ENCODE measurements at regions of chr12 and their contacts with region 1.

Region 1: DNA sequence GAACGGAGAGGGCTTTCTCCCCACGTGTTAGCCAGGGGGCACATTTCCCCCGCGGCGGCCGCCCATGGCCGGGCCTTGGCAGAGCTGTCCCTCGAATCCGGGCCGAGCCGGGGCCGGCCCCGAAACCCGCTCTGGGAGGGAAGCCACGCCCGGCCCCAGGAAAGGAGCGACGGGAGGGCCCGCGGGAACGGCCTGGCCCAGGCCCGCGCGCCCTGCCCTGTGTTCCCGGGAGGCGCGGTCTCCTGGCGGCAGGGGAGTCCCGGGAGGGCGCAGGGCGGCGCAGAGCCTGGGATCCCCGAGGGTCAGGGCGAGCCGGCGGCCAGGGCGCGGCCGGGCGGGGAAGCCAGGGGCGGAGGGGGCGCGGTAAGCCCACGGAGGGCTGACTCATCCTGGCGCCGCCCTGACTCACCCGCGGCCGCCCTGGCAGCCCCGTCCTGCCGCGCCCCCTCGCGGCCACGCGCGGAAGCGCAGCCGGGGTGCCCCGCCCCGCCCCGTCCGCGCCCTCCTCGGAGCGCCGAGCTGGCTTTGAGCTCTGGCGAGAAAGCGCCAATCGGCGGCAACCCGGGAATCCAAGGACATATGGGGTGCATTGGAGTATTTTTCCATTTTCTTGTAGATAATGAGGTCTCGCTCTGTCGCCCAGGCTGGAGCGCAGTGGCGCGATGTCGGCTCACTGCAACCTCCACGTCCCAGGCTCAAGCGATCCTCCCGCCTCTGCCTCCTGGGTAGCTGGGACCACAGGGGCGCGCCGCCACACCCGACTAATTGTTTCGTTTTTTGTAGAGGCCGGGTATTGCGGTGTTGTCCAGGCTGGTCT is 31.8 kb upstream of the PLEKHG6 start:
- DNase-seq: peak; percentile 89
- H3K4me3 Mint-ChIP-seq: peak overlapping the region; percentile 66
- H3K27ac Mint-ChIP-seq: peak overlapping the region; percentile 92
- H3K4me1 Mint-ChIP-seq: peaks cover 44% of the 10 kb centered on the region
- H3K27me3 Mint-ChIP-seq: no peaks in the 10 kb centered on the region
- CTCF ChIP-seq: peak; percentile 94

Region 2: DNA sequence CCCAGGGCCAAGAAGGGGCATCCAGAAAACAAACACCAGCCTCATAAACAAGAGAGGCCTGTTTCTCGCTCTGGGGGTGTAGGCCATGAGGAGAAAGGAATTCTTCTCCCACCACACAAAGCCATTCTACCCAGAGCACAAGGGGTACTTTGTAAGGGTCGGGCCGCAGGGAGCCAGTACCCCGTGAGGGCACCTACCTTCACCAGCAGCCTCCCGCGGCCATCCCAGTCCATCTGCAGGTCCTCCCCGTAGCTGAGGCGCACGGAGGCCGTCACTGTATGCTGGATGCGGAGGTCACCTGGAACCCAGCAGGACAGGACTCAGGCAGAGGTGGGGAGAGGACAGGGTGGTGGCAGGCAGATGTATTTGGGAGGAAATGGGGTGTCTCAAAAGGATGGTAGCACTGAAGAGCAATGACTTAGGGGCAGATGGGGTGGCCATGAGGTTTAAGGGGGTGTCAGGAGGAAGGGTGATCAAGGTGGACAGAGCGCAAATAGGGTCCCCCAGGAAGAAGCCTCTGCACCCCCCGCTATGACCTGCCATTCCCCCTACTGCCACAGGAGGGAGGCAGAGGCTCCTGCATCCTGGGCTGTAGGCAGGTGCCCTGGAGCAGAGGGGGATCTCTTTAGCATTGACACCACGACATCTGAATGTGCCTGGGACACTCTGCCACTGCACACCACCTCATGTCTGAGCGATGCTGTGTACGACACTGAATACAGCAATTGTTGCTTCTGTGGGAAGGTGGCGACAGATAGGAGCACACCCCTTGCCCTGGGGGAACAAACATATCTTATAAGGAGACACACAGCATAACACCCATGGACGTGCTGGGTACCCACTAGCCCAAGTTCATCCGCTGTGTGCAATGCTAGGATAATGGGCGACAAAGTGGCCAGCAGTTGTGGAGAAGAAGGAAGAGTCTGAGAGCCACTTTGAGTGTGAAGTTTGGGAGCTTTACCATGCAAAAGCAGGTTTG is 215.6 kb before region 1 on chr12:
- CTCF ChIA-PET with region 1: interaction called, 65 read pairs
- POLR2A ChIA-PET with region 1: interaction called, 4 read pairs
- intact Hi-C with region 1: loop called (anchors 1 kb)
- DNase-seq: peak; percentile 55
- H3K4me3 Mint-ChIP-seq: no peak overlapping the region
- H3K27ac Mint-ChIP-seq: no peak overlapping the region
- H3K4me1 Mint-ChIP-seq: no peaks in the 10 kb centered on the region
- H3K27me3 Mint-ChIP-seq: no peaks in the 10 kb centered on the region
- CTCF ChIP-seq: peak; percentile 98

Region 3: DNA sequence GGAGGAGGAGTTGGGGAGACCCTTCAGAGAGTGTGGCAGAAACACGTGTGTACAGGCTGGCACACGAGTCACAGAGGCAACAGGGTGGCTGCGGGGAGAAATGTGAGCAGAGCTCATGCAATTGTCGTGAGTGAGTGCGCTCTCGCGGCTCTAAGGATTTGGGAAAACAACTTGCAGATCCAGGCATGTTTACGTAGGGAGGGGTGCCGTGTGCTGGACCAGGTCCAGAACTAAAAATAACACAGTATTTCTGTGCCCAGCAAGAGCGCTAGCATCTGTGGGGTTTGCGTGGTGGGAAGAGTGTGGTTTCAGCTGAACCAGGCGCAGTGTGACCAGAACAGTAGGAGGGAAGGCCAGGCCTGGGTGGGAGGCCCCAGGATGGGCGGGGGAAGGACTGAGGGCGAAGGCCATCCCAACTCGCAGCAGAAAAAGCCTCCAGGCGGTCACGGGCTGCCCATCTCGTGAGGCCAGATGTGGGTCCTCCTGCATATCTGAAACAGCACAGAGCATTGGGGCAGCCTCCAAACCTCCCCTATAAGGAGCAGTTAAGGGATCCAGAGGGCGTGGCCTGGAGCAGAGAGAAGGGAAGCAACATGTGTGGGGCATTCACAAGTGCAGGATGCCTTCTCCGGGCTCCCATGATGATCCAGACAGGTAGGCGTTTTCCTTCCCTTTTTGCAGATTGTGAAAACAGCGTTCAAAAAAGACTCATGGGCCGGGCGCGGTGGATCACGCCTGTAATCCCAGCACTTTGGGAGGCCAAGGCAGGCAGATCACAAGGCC is 96.3 kb before region 1 on chr12:
- CTCF ChIA-PET with region 1: interaction called, 23 read pairs
- POLR2A ChIA-PET with region 1: interaction called, 40 read pairs
- intact Hi-C with region 1: no loop called
- DNase-seq: peak; percentile 92
- H3K4me3 Mint-ChIP-seq: peak overlapping the region; percentile 36
- H3K27ac Mint-ChIP-seq: no peak overlapping the region
- H3K4me1 Mint-ChIP-seq: peaks cover 19% of the 10 kb centered on the region
- H3K27me3 Mint-ChIP-seq: no peaks in the 10 kb centered on the region
- CTCF ChIP-seq: no peak

Region 4: GRCh38 chr12:6205144-6205539 is 73.5 kb before region 1 on chr12:
- CTCF ChIA-PET with region 1: interaction called, 369 read pairs
- POLR2A ChIA-PET with region 1: interaction called, 116 read pairs
- intact Hi-C with region 1: loop called (anchors 1 kb)
- DNase-seq: no peak
- H3K4me3 Mint-ChIP-seq: no peak overlapping the region
- H3K27ac Mint-ChIP-seq: peak overlapping the region; percentile 58
- H3K4me1 Mint-ChIP-seq: peaks cover 28% of the 10 kb centered on the region
- H3K27me3 Mint-ChIP-seq: no peaks in the 10 kb centered on the region
- CTCF ChIP-seq: no peak

Region 5: GRCh38 chr12:6230321-6231110 is 48.1 kb before region 1 on chr12:
- CTCF ChIA-PET with region 1: interaction called, 290 read pairs
- POLR2A ChIA-PET with region 1: interaction called, 480 read pairs
- intact Hi-C with region 1: loop called (anchors 5 kb)
- DNase-seq: peak; percentile 65
- H3K4me3 Mint-ChIP-seq: peak overlapping the region; percentile 68
- H3K27ac Mint-ChIP-seq: peak overlapping the region; percentile 98
- H3K4me1 Mint-ChIP-seq: peaks cover 44% of the 10 kb centered on the region
- H3K27me3 Mint-ChIP-seq: no peaks in the 10 kb centered on the region
- CTCF ChIP-seq: no peak

Region 6: GRCh38 chr12:6312529-6313325 is 34.1 kb after region 1 on chr12:
- CTCF ChIA-PET with region 1: interaction called, 9 read pairs
- POLR2A ChIA-PET with region 1: interaction called, 13 read pairs
- intact Hi-C with region 1: no loop called
- DNase-seq: peak; percentile 84
- H3K4me3 Mint-ChIP-seq: peak overlapping the region; percentile 24
- H3K27ac Mint-ChIP-seq: peak overlapping the region; percentile 54
- H3K4me1 Mint-ChIP-seq: peaks cover 14% of the 10 kb centered on the region
- H3K27me3 Mint-ChIP-seq: no peaks in the 10 kb centered on the region
- CTCF ChIP-seq: no peak

Region 7: DNA sequence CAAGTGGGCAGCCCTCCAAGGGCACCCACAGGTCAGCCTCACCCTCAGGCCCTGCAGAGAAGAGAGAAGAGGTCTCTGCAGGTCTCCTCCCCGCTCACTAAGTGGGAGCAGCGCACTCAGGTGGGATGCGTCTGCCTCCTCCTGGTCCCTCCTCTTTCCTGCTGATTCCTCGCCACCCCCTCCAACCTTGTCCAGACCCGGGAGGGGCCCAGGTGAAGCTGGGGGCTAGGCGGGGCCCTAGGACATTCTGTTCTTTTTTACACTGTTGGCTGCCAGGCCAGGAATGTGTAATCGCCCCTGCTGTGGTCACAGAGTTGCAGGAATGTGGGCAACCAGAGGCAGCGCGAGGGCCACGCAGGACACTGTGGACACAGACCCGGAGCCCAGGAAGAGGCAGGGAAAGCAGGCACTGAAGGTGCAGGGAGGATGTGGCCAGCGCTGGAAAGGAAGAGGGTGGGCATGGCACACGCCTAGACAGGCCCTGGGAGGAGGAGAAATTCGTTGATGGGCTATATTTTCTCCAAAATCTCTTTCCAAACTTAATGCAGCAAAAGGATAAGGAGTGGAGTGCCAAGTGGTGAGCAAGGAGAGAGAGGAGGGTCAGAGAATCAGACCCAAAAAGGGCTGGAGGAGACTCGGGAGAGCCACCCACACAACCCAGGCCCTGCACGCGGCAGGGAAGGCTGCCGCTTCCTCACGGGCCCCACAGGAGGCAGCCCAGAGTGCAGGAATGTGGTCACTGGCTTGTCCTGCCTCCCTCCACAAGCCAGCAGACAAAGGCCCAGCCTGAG is 97.6 kb after region 1 on chr12:
- CTCF ChIA-PET with region 1: interaction called, 5 read pairs
- POLR2A ChIA-PET with region 1: interaction called, 20 read pairs
- intact Hi-C with region 1: no loop called
- DNase-seq: peak; percentile 97
- H3K4me3 Mint-ChIP-seq: peak overlapping the region; percentile 89
- H3K27ac Mint-ChIP-seq: peak overlapping the region; percentile 97
- H3K4me1 Mint-ChIP-seq: peaks cover 56% of the 10 kb centered on the region
- H3K27me3 Mint-ChIP-seq: no peaks in the 10 kb centered on the region
- CTCF ChIP-seq: no peak

Measured in MCF 10A (cell line).